ENCODE measurements at regions of chr4 and their contacts with region 1.

Region 1: GRCh38 chr4:153232768-153233167 is 28.5 kb downstream of the TRIM2 start:
- DNase-seq: peak; percentile 57 to 60
- H3K4me3 ChIP-seq: no peak overlapping the region
- H3K27ac ChIP-seq: peak overlapping the region; percentile 68
- H3K4me1 ChIP-seq: peaks cover 62% of the 10 kb centered on the region
- H3K27me3 ChIP-seq: no peaks in the 10 kb centered on the region
- CTCF ChIP-seq: no peak; the same call in 1 of the 2 replicates

Region 2: GRCh38 chr4:153296040-153296823 is 63.5 kb after region 1 on chr4:
- CTCF ChIA-PET with region 1: no interaction called
- POLR2A ChIA-PET with region 1: interaction called, 4 read pairs
- intact Hi-C with region 1: loop called (anchors 5 kb)
- DNase-seq: peak in 1 of 2 experiments; percentile 50
- H3K4me3 ChIP-seq: no peak overlapping the region
- H3K27ac ChIP-seq: peak overlapping the region; percentile 68; the same call in 1 of the 2 replicates
- H3K4me1 ChIP-seq: peaks cover 41% of the 10 kb centered on the region
- H3K27me3 ChIP-seq: no peaks in the 10 kb centered on the region
- CTCF ChIP-seq: no peak

Measured in PC-9 (cell line).